K562 (cell line): ENCODE measurements at regions of chr19 and their contacts with region 1.

Region 1: DNA sequence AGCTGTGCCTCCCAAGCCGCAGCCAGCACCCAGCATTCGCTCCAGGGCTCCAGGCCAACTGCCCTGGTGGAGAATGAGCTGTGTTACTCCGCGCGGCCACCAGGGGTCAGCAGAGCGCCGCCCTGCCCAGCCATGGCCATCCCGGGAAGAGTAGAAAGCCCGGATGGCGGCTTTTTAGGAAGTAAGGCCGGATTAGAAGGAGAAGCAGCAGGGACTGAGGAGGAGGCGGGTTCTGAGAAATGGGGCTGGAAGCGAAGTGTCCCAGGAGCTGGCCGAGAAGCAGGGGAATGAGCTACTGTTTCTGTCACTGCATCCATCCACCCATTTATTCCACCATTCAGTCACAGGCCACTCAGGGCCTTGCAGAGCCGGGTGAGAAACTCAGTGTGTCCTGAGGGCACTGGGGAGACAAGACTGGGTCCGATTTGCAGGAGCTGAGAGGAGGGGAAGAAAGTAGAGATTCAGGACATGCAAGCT is 6.6 kb upstream of the NPAS1 start:
- DNase-seq: peak; percentile 81 to 87 (median 83)
- ATAC-seq: peak; percentile 98
- H3K4me3 ChIP-seq: no peak overlapping the region
- H3K27ac ChIP-seq: no peak overlapping the region
- H3K4me1 ChIP-seq: peaks cover 3 to 9% of the 10 kb centered on the region in 2 experiments; a peak in 3 of 5 replicates
- H3K27me3 ChIP-seq: no peaks in the 10 kb centered on the region
- CTCF ChIP-seq: peak; percentile 94 to 98 (median 97)
- EP300 ChIP-seq: no peak
- POLR2A ChIP-seq: no peak
- RAD21 ChIP-seq: peak; percentile 91 to 96

Region 2: DNA sequence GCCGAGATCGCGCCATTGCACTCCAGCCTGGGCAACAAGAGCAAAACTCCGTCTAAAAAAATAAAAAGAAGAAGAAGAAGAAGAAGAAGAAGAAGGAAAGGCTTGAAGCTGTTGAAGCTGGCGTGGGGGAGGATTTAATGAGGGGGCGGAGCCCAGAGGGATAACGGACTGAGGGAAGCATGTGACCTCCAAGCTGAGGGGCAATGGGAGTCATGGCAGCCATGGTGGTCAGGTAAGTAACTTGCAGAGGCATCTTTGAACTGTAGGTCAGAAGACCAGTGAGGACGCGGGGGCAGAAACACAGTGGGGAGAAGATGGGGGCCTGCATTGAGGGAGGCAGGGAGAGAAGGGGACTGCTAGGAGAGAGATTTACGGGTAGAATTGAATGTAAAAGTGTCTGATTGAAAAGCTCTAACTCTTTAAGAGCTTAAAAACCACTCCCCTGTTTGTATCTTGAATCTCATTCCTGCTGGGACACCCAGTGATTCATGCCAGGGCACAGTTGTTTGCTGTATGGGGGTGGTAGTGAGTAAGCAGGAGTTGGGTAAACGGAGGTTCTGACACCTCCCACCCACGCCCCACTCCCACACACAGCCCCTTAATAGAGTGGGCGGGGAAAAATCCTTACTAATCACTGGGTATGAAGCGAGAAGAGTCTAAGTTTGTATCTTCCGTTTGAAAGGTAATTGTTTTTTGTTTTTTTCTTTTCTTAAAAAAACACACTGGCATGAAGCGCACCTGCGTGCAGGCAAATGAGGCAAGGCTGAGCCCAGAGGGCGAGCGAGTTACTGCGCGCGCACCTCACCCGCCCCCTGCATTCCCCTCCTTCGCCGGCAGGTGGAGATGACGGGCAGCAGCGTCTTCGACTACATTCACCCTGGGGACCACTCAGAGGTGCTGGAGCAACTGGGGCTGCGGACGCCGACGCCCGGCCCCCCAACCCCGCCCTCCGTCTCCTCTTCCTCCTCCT is 22.3 kb after region 1 on chr19:
- CTCF ChIA-PET with region 1: interaction called, 4 read pairs
- POLR2A ChIA-PET with region 1: no interaction called
- in situ Hi-C with region 1: no loop called
- intact Hi-C with region 1: loop called (anchors 1 kb)
- DNase-seq: peak; percentile 93 to 97 (median 95)
- ATAC-seq: peak; percentile 93
- H3K4me3 ChIP-seq: peak overlapping the region; percentile 47
- H3K27ac ChIP-seq: peak overlapping the region; percentile 68
- H3K4me1 ChIP-seq: peaks cover 0 to 32% of the 10 kb centered on the region in 2 experiments; a peak in 2 of 5 replicates
- H3K27me3 ChIP-seq: no peaks in the 10 kb centered on the region
- CTCF ChIP-seq: peak; percentile 91 to 93 (median 93)
- EP300 ChIP-seq: peak; percentile 3; the same call in 1 of the 2 replicates
- POLR2A ChIP-seq: 0 out of 2 replicates have a peak, but pooled peaks have one; percentile 31
- RAD21 ChIP-seq: peak; percentile 48 to 65

Region 3: DNA sequence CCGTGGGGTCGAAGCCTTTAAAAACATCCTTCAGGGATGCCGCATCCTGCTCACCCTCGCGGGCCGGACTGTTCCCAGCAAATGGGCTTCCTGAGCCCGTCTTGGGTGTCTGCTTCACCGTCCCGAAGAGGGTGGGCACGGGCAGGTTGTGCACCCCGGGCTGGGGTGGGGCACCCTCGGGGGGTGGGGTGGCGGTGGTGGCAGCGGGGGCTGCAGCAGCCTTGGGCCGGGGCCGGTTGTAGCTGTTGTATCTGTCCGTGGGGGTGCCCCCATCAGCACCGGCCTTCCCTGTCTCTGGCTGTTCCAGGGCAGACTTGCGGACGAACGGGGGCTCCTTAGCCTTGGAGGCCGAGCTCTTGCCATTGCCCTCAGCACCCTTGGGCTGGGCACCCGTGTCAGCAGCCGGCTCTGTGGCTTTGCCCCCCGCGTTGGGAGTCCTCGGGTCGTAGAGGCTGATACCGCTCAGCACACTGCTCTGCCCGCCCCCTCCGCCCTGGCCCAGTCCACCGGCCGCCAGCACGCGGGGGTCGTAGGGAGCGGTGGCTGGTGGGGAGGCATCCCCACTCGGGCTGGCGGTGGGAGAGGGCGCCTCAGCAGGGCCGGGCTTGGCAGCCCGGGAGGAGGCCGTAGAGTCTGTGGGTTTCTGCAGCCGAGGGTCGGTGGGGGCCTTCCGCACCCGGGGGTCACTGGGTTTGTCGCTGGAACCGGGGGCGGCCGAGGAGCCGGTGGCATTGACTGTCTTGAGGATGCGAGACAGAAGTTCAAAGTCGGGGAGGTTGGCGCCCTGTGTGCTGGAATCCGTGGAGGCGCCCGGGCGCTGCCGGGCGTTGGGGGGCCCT is 53.5 kb after region 1 on chr19:
- CTCF ChIA-PET with region 1: no interaction called
- POLR2A ChIA-PET with region 1: no interaction called
- in situ Hi-C with region 1: no loop called
- intact Hi-C with region 1: loop called (anchors 10 kb)
- DNase-seq: no peak
- ATAC-seq: no peak
- H3K4me3 ChIP-seq: no peak overlapping the region
- H3K27ac ChIP-seq: no peak overlapping the region
- H3K4me1 ChIP-seq: peaks cover 0 to 19% of the 10 kb centered on the region in 2 experiments; a peak in 1 of 5 replicates
- H3K27me3 ChIP-seq: no peaks in the 10 kb centered on the region
- CTCF ChIP-seq: no peak
- EP300 ChIP-seq: no peak
- POLR2A ChIP-seq: no peak
- RAD21 ChIP-seq: no peak